ENCODE measurements at regions of chr21 and their contacts with region 1.

Region 1: DNA sequence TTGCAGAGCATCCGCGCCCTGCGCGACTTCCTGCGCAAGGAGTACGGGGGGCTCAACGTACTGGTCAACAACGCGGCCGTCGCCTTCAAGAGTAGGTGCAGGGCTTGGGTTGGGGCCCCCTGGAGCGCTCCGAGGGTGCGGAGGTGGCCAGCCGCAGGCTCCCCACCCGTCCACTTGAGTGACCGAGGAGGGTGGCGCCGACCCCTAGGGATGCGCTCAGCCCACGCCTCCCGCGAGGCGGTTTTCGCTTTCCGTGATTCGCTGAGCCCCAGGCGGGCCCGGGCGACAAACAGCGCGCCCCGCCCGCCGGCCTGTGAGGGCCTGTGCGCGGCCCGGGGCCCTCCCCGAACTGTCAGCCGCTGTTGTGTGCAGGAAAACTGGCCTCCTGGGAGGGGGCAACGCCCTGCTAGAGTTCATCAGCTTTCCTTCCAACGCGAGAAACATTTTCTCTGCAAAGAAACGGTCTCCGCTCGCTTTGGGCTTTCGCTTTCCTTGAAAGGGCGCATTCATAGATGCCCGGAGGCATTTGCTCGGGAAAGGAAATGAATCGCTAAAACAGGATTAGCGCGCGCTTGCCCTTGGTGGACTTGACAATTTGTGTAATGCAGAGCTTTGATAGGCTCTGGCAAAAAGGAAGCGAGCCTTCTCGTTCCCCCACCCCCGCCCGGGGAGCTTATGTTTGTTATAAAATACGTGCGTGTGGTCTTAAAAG is 668 bp downstream of the CBR3 start:
- DNase-seq: peak; percentile 68
- H3K4me3 Mint-ChIP-seq: peak overlapping the region; percentile 94
- H3K27ac Mint-ChIP-seq: peak overlapping the region; percentile 94
- H3K4me1 Mint-ChIP-seq: peaks cover 22% of the 10 kb centered on the region
- H3K27me3 Mint-ChIP-seq: peaks cover 5% of the 10 kb centered on the region

Region 2: DNA sequence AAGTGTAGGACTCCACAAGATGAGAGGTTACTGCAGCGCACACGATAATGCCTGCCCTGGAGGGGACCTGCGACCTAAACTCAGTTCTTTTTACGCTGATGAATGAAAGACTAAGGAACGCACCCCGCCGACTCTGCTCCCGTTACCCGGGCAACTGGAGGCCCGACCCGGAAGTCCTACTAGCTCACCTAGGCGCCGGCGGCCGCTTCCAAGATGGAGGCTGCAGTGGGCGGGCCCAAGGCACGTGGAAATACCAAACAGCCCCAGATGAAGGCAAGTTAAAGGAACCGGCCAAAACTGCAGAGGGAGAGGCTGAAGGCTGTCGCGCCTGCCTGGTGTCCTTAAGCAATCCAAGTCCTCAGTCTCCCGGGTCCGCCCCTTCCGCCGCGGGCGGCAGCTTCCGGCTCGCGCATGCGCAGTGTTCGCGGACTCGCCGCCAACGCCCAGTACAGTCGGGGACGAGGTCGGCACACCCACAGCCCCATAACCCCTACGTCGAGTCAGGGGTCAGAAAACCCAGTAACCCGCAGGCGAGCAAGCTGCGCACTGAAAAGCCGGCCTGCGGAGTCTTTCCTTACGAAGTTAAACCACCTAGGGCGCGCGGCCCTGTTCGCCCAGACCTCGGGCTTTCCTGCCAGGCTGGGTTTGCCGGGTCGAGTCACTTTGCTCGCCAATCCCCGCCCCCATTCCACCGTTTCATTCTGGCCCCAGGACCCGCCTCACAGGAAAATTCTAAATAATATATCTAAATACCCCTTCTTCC is 75.2 kb before region 1 on chr21 and contains the start of gene SETD4:
- intact Hi-C with region 1: loop called (anchors 2 kb)
- DNase-seq: peak; percentile 91
- H3K4me3 Mint-ChIP-seq: peak within 1 kb of the TSS; percentile 93
- H3K27ac Mint-ChIP-seq: peak within 1 kb of the TSS; percentile 98
- H3K4me1 Mint-ChIP-seq: peaks cover 23% of the 10 kb centered on the region
- H3K27me3 Mint-ChIP-seq: peaks cover 3% of the 10 kb centered on the region
- total RNA-seq, gene SETD4: 21.9 and 22.0 TPM in 2 replicates

Region 3: DNA sequence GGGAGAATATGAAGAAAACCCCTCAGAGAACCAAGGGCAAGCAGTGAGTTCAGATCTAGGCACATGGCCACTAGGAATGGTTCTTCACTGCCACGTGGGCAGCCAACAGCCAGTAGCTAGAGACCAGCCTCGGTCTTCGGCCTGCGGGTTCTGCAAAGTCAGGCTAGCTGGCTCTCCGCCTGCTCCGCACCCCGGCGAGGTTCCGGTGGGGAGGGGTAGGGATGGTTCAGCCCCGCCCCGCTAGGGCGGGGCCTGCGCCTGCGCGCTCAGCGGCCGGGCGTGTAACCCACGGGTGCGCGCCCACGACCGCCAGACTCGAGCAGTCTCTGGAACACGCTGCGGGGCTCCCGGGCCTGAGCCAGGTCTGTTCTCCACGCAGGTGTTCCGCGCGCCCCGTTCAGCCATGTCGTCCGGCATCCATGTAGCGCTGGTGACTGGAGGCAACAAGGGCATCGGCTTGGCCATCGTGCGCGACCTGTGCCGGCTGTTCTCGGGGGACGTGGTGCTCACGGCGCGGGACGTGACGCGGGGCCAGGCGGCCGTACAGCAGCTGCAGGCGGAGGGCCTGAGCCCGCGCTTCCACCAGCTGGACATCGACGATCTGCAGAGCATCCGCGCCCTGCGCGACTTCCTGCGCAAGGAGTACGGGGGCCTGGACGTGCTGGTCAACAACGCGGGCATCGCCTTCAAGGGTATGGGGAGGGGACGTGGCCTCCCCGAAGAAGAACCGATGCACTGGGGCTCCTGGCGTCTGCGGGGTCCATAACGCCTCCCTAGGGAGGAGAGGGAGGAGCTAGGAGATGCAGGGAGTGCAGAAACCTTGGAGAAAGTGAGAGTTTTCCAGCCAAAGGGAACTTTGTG is 65.6 kb before region 1 on chr21 and contains the start of gene CBR1:
- intact Hi-C with region 1: loop called (anchors 1 kb)
- DNase-seq: peak; percentile 88
- H3K4me3 Mint-ChIP-seq: peak within 1 kb of the TSS; percentile 91
- H3K27ac Mint-ChIP-seq: peak within 1 kb of the TSS; percentile 85
- H3K4me1 Mint-ChIP-seq: peaks cover 46% of the 10 kb centered on the region
- H3K27me3 Mint-ChIP-seq: no peaks in the 10 kb centered on the region
- total RNA-seq, gene CBR1: 62.7 and 62.8 TPM in 2 replicates

Region 4: GRCh38 chr21:36175771-36176565 is 40.4 kb after region 1 on chr21:
- intact Hi-C with region 1: loop called (anchors 2 kb)
- DNase-seq: no peak
- H3K4me3 Mint-ChIP-seq: no peak overlapping the region
- H3K27ac Mint-ChIP-seq: no peak overlapping the region
- H3K4me1 Mint-ChIP-seq: peaks cover 10% of the 10 kb centered on the region
- H3K27me3 Mint-ChIP-seq: no peaks in the 10 kb centered on the region